ENCODE measurements at regions of chr6 and their contacts with region 1.

Region 1: GRCh38 chr6:79413562-79414002 is 123.6 kb downstream of the LCA5 start:
- DNase-seq: no peak
- H3K4me3 ChIP-seq: no peak overlapping the region
- H3K27ac ChIP-seq: no peak overlapping the region
- H3K4me1 ChIP-seq: peaks cover 0 to 4% (median 0%) of the 10 kb centered on the region in 4 experiments; a peak in 3 of 7 replicates
- H3K27me3 ChIP-seq: no peaks in the 10 kb centered on the region
- CTCF ChIP-seq: no peak
- EP300 ChIP-seq: no peak
- POLR2A ChIP-seq: no peak
- RAD21 ChIP-seq: no peak

Region 2: GRCh38 chr6:79094938-79095337 is 318.6 kb before region 1 on chr6:
- CTCF ChIA-PET with region 1: no interaction called
- POLR2A ChIA-PET with region 1: no interaction called
- DNase-seq: no peak
- H3K4me3 ChIP-seq: no peak overlapping the region
- H3K27ac ChIP-seq: no peak overlapping the region
- H3K4me1 ChIP-seq: no peaks in the 10 kb centered on the region
- H3K27me3 ChIP-seq: no peaks in the 10 kb centered on the region
- CTCF ChIP-seq: no peak
- EP300 ChIP-seq: no peak
- POLR2A ChIP-seq: no peak
- RAD21 ChIP-seq: no peak

Region 3: GRCh38 chr6:79257381-79258205 is 156.0 kb before region 1 on chr6:
- CTCF ChIA-PET with region 1: no interaction called
- POLR2A ChIA-PET with region 1: no interaction called
- DNase-seq: no peak
- H3K4me3 ChIP-seq: no peak overlapping the region
- H3K27ac ChIP-seq: no peak overlapping the region
- H3K4me1 ChIP-seq: no peaks in the 10 kb centered on the region
- H3K27me3 ChIP-seq: no peaks in the 10 kb centered on the region
- CTCF ChIP-seq: no peak
- EP300 ChIP-seq: no peak
- POLR2A ChIP-seq: no peak
- RAD21 ChIP-seq: no peak

Region 4: GRCh38 chr6:79425589-79426311 is 12.2 kb after region 1 on chr6:
- CTCF ChIA-PET with region 1: interaction called, 24 read pairs
- POLR2A ChIA-PET with region 1: no interaction called
- DNase-seq: no peak
- H3K4me3 ChIP-seq: no peak overlapping the region
- H3K27ac ChIP-seq: no peak overlapping the region
- H3K4me1 ChIP-seq: no peaks in the 10 kb centered on the region; a peak in 2 of 7 replicates
- H3K27me3 ChIP-seq: no peaks in the 10 kb centered on the region
- CTCF ChIP-seq: no peak
- EP300 ChIP-seq: no peak
- POLR2A ChIP-seq: no peak
- RAD21 ChIP-seq: no peak

Region 5: GRCh38 chr6:79431537-79431933 is 18.0 kb after region 1 on chr6:
- CTCF ChIA-PET with region 1: interaction called, 24 read pairs
- POLR2A ChIA-PET with region 1: no interaction called
- DNase-seq: no peak
- H3K4me3 ChIP-seq: no peak overlapping the region
- H3K27ac ChIP-seq: no peak overlapping the region
- H3K4me1 ChIP-seq: no peaks in the 10 kb centered on the region; a peak in 2 of 7 replicates
- H3K27me3 ChIP-seq: no peaks in the 10 kb centered on the region
- CTCF ChIP-seq: peak; percentile 32 to 54 (median 45)
- EP300 ChIP-seq: no peak
- POLR2A ChIP-seq: no peak
- RAD21 ChIP-seq: peak; percentile 59

Measured in H1 (cell line).